Right ventricle myocardium superior (tissue), 1 donor: ENCODE measurements at regions of chr18 and their contacts with region 1.

Region 1: DNA sequence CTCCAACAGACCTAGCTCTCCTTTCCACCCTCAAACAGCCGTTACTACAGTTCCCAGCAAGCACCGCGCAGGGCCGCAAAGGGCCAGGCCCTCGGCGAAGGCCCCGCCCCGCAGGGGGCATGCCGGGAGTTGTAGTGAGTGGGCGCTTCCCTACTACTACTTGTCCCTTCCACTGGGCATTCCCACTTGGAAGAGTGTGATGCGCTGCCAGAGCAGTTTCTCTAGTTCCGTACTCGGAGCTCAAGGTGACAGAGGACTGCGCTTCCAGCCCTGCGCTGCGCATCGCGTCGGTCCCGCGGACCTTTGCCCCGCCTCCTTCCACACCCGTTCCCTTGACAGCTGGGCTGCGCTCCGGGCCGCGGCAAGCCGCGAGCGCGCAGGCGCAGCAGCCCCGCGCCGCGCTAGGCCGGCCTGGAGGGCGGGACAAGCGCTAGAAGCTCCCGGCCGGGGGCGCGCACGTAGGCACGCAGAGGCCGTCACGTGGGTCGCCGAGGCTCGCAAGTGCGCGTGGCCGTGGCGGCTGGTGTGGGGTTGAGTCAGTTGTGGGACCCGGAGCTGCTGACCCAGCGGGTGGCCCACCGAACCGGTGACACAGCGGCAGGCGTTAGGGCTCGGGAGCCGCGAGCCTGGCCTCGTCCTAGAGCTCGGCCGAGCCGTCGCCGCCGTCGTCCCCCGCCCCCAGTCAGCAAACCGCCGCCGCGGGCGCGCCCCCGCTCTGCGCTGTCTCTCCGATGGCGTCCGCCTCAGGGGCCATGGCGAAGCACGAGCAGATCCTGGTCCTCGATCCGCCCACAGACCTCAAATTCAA is at the start of gene VAPA:
- DNase-seq: peak; percentile 97
- ATAC-seq: peak; percentile 97
- total RNA-seq, gene VAPA: 189 TPM

Region 2: DNA sequence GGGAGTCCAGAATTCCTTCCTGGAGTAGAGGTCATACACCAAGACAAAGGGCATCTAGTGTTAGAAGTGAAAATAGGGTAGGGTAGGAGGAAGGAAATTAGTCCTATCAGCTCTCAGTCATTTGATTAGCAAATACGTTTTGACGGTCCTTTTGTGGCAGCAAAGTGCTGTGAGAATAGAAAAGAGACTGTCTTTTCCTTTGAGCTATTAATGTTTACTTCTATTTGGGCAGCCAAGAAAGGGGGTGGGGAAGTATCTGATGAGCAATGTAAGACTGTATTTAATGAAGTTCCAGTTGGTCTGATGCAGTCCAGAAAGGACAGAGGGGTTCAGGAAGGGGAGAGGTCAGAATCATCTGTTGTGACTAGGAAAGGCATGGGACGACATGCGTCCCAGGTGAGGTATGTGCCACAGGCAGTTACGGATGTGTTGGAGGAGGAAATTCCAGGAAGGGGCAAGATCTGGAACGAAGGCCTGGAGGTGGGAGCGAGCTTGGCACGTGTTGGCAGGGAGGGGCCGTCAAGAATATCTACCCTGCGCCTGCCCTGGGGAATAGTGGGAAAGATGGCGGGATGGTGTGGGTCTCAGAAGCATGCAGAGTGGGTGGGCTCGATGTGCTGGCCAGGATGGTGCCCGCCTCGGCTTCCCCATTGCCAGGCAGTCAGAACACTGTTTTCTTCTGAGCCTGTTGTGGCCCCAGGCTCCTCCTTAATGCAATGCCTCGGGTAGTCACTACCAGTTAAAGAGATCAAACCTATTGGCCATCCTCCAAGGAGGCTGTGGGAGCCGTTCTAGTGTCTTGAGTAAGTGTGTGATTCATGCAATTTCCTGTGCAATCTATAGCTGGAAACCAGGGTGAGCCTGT is 85.9 kb before region 1 on chr18:
- intact Hi-C with region 1: loop called (anchors 10 kb)
- DNase-seq: peak; percentile 66
- ATAC-seq: no peak